Activated CD8-positive, alpha-beta memory T cell treated with anti-CD3 and anti-CD28 coated beads, Interleukin-2, amount 10 ng/mL, durations not matched to agents 7 days and 5 days (primary cell): ENCODE measurements at regions of chr17 and their contacts with region 1.

Region 1: DNA sequence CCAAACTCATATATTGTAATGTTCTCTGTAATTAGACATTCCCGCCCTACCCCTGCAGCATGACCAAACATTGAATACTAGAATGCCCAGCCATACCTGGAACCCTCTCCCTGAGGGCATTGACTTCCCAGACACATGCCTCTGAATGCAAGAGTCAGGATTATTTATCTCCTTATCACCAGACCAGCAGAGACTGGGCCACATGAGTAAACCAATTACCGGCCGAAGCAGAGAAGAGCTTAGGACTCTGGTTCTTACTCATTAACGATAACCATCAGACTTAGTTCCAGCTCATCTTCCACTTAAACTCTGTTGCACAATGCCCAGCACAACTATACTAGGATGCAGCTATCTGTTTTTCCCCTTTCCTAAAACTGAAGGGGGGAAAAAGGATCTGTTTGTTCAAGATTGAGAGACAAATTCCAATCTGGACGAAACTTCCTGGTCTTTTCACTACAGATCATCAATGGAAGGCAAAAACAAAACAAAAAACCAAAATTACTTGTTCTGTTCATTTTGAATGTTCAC is 88.2 kb upstream of the CORO6 start:
- DNase-seq: no peak
- ATAC-seq: no peak
- H3K4me3 Mint-ChIP-seq: no peak overlapping the region
- H3K27ac Mint-ChIP-seq: no peak overlapping the region
- H3K4me1 Mint-ChIP-seq: peaks cover 35% of the 10 kb centered on the region
- H3K27me3 Mint-ChIP-seq: no peaks in the 10 kb centered on the region

Region 2: GRCh38 chr17:29722411-29723198 is 11.7 kb after region 1 on chr17:
- CTCF ChIA-PET with region 1: interaction called, 12 read pairs
- DNase-seq: peak; percentile 49
- ATAC-seq: peak; percentile 64
- H3K4me3 Mint-ChIP-seq: peak overlapping the region; percentile 16
- H3K27ac Mint-ChIP-seq: peak overlapping the region; percentile 29
- H3K4me1 Mint-ChIP-seq: peaks cover 51% of the 10 kb centered on the region
- H3K27me3 Mint-ChIP-seq: no peaks in the 10 kb centered on the region